Activated naive CD4-positive, alpha-beta T cell treated with anti-CD3 and anti-CD28 coated beads for 36 hours (primary cell): ENCODE measurements at regions of chr9 and their contacts with region 1.

Region 1: DNA sequence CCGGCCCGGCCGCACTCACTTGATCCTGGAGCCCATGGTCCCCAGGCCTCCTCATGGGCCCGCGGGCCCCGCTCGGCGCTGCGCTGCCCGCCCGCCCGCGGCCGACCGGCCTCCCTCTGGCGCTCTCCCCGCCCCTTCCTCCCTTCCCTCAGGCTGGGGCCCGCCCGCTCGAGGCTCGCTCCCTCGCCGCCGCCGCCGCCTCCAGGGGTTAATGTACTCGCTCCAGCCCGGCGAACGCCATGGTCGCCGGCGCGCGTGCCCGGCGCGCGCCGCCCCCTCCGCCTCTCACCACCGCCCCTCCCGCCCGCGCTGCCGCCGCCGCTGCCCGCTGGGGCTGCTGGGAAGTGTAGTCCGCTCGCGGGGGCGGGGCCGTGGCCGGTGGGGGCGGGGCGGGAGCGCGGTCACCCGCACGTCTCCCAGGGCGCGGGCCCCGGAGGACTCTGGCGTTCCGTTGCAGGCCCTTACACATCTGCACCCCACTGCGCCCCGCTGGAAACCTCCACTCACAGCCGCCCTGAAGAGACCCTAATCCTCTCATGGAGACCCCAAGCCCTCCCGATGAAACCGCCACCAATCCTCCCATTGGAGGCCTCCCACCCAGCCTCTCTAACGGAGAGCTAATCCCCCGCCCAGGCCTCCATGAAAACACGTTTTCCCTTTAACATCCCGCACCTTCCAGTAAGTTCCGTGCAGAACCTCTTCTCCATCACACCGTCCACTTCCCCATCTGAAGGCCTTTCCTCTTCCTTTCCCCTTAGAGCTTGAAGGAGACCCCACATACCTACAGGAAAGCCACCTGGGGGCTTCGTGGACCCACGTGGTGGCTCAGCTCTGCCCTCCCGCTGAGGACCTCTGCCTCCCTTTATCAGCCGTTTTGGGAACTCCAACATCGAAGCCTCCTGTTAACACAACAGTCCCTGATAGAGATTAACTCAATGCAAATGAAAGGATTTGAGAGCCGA is at the start of gene DENND1A:
- DNase-seq: peak; percentile 89
- H3K4me3 Mint-ChIP-seq: peak within 1 kb of the TSS; percentile 79
- H3K27ac Mint-ChIP-seq: peak within 1 kb of the TSS; percentile 78
- H3K4me1 Mint-ChIP-seq: peaks cover 38% of the 10 kb centered on the region
- H3K27me3 Mint-ChIP-seq: peaks cover 4% of the 10 kb centered on the region
- total RNA-seq, gene DENND1A: 28.4 to 29.6 TPM

Region 2: DNA sequence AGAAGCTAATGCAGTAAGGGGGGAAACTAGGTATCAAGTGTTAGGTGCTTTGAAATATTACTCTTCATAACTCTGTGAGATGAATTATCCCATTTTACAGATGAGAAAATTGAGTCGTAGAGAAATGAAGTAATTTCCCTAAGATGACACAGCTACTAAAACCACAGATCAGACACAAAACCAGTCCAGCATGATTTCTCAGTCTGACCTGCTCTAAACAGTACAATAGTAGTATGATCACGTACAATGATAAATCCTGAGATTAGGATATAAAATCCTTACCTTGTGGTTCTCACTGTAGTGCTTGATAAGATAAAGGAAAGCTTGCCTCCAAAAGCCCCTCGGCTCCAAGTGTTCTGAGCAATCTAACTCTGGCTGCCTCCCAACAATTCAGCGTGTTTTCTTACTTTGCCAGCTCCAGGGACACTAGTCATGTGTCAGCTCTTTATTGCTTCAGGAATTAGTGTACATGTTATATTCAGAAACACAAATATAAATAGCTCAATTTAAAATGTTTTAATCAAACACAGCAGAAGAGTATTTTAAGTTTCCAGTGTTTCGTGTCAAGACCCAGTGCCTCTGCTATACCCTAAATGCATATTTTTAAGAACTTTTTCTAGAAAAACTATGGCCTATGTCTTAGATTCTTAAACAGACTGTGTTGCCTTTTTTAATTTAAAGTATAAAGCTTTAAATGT is 243.9 kb before region 1 on chr9:
- CTCF ChIA-PET with region 1: no interaction called
- intact Hi-C with region 1: loop called (anchors 5 kb)
- DNase-seq: no peak
- H3K4me3 Mint-ChIP-seq: no peak overlapping the region
- H3K27ac Mint-ChIP-seq: no peak overlapping the region
- H3K4me1 Mint-ChIP-seq: peaks cover 59% of the 10 kb centered on the region
- H3K27me3 Mint-ChIP-seq: no peaks in the 10 kb centered on the region

Region 3: GRCh38 chr9:123749580-123750202 is 180.5 kb before region 1 on chr9:
- CTCF ChIA-PET with region 1: no interaction called
- intact Hi-C with region 1: loop called (anchors 2 kb)
- DNase-seq: peak; percentile 43
- H3K4me3 Mint-ChIP-seq: no peak overlapping the region
- H3K27ac Mint-ChIP-seq: no peak overlapping the region
- H3K4me1 Mint-ChIP-seq: peaks cover 21% of the 10 kb centered on the region
- H3K27me3 Mint-ChIP-seq: no peaks in the 10 kb centered on the region

Region 4: DNA sequence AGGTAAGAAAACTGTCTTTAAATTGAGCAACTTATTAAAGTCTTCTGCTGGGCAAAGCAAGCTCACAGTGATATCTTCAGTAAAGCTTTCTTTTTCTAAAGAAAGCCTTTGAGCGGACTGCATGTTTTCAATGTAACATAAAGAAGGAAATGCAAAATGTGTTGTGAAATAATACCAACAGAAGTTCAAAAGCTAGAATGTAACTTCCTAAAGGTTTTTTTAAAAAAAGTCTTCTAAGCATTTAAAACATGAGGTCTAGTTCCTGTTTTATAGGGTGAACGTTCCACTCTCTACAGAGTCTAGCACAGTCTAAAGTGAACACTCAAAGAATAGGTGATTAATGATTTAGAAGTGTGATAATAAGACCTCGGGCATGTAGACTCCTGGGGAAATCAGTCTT is 63.1 kb before region 1 on chr9:
- CTCF ChIA-PET with region 1: no interaction called
- intact Hi-C with region 1: loop called (anchors 2 kb)
- DNase-seq: no peak
- H3K4me3 Mint-ChIP-seq: no peak overlapping the region
- H3K27ac Mint-ChIP-seq: peak overlapping the region; percentile 78
- H3K4me1 Mint-ChIP-seq: peaks cover 34% of the 10 kb centered on the region
- H3K27me3 Mint-ChIP-seq: no peaks in the 10 kb centered on the region

Region 5: DNA sequence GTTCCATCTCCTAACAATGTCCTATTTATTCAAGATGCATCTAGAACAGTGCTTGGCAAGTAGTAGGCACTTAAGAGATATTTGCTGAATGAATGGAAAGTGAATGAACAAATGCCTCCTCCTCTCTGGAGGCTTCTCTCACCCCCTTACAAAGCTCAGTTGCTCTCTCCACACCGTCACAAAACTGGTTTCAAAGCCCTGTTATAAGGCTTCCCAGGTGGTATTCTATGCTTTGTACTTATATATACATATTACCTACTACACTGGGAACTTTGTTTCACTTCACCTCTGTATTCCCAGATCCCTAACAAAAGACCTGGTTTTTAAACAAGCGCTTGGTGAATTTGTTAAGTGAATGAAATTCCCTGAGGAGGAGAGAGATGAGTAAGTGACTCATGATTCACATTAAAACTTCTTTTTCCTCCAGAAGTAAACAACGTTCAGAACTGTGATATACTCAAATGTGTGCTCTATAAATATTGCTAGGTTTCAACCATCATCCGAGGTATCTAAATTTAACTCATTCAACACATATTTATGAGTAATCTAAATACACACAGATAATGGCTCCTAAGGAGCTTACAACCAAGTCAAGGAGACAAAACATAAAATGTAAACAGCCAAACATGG is 36.2 kb before region 1 on chr9:
- CTCF ChIA-PET with region 1: no interaction called
- intact Hi-C with region 1: no loop called
- DNase-seq: no peak
- H3K4me3 Mint-ChIP-seq: no peak overlapping the region
- H3K27ac Mint-ChIP-seq: no peak overlapping the region
- H3K4me1 Mint-ChIP-seq: peaks cover 12% of the 10 kb centered on the region
- H3K27me3 Mint-ChIP-seq: no peaks in the 10 kb centered on the region

Region 6: DNA sequence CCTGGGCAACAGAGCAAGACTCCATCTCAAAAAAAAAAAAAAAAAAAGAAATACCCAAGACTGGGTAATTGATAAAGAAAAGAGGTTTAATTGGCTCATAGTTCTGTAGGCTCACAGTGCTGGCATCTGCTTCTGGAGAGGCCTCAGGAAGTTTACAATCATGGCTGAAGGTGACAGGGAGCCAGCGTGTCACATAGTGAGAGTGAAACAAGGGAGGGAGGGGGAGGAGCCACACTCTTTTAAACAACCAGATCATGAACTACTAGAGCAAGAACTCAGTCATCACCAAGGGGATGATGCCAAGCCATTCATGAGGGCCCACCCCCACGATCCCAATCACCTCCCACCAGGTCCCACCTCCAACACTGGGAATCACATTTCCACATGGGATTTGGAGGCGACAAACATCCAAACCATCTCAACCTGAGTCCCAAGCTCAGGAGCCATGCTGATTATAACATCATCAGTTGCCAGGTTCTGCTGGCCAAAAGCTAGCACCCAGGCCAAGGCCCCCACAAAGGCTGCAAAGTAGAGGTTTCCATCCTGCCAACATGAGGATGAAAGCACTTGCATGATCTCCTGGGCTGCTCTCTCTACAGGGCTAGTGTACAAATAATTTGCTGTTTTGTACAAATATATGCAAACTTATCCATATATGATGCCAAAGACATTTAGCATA is 15.5 kb before region 1 on chr9:
- CTCF ChIA-PET with region 1: no interaction called
- intact Hi-C with region 1: loop called (anchors 2 kb)
- DNase-seq: peak; percentile 67
- H3K4me3 Mint-ChIP-seq: no peak overlapping the region
- H3K27ac Mint-ChIP-seq: no peak overlapping the region
- H3K4me1 Mint-ChIP-seq: peaks cover 14% of the 10 kb centered on the region
- H3K27me3 Mint-ChIP-seq: no peaks in the 10 kb centered on the region